ENCODE measurements at regions of chr1 and their contacts with region 1.

Region 1: GRCh38 chr1:24635195-24635843 is 7.8 kb upstream of the SRRM1 start:
- DNase-seq: peak; percentile 86
- H3K4me3 ChIP-seq: no peak overlapping the region
- H3K27ac ChIP-seq: no peak overlapping the region
- H3K4me1 ChIP-seq: peaks cover 4% of the 10 kb centered on the region
- CTCF ChIP-seq: peak; percentile 97

Region 2: DNA sequence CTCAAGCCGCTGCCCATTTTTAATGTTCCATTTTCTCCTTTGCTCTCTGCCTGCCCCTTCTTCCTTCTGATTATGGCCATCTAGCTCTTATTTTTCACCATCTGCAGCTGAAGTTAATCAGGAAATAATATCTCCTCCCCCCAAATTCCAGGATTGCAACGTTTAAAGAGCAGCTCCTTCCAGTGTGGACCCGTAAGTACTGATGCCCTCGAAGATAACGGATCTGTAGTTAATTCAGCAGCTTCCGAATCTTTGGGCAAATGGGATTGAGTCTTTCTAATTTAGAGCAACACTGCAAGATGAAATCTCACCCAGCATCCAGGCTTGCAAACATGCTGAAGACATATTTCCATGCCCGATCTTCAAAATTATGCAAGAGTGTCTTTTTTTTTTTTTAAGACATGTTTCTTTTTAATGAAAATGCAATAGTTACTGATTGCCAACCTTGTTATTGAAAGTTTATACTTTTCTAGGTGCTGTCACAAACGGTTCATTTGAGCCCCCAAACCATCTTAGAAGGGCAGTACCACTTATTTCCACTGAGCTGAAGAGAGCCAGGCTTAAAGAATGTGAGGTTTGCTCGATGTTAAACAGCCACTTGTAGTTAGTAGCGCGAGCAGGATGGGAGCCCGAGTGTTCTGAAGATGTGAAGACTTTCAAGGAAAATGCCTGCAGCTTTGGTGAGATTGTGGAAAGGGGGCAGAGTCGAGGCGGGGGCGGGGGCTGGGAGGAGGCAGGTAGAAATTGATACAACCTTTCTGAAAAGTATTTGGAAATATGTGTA is 143.6 kb before region 1 on chr1:
- CTCF ChIA-PET with region 1: no interaction called
- POLR2A ChIA-PET with region 1: no interaction called
- intact Hi-C with region 1: no loop called
- DNase-seq: no peak
- H3K4me3 ChIP-seq: no peak overlapping the region
- H3K27ac ChIP-seq: no peak overlapping the region
- H3K4me1 ChIP-seq: peaks cover 7% of the 10 kb centered on the region
- CTCF ChIP-seq: no peak

Region 3: DNA sequence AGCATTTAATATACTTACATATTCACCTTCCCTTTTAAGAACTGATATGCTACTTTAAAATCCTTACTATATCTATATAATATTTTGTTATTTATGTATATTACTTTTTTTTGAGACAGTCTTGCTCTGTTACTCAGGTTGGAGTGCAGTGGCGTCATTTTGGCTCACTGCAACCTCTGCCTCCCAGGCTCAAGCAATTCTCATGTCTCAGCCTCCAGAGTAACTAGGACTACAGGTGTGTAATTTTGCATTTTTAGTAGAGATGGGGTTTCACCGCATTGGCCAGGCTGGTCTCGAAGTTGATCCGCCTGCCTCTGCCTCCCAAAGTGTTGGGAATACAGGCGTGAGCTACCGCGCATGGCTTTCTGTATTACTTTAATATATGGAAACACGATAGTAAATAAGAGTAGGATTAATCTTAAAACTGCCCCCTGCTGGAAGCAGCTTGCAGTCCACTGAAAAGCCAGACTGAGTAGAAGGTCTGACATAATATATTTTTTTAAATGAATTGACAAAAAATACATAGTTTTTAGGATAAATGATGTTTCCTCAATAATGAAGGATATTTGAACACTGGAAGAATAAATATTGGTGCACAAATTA is 108.3 kb before region 1 on chr1:
- CTCF ChIA-PET with region 1: no interaction called
- POLR2A ChIA-PET with region 1: no interaction called
- intact Hi-C with region 1: no loop called
- DNase-seq: peak; percentile 57
- H3K4me3 ChIP-seq: no peak overlapping the region
- H3K27ac ChIP-seq: no peak overlapping the region
- H3K4me1 ChIP-seq: peaks cover 62% of the 10 kb centered on the region
- CTCF ChIP-seq: peak; percentile 93

Region 4: DNA sequence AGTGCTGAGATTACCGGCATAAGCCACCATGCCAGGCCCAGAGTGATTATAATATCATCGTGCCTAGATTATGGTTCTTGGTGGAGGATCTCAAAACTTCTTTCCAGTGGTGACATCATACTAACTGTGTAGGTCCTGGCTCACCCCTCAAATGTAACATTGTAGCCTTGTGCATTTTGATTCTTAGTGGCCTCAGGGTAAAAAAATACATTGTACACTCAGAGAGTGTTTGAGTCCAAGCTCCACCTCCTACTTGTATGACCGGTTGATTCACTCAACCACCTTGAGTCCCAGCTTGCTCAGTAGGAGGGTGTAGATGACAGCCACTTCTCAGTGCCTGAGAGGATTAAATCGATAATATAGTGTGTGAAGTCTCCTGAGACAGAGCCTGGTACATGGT is 41.2 kb before region 1 on chr1:
- CTCF ChIA-PET with region 1: no interaction called
- POLR2A ChIA-PET with region 1: interaction called, 3 read pairs
- intact Hi-C with region 1: loop called (anchors 5 kb)
- DNase-seq: no peak
- H3K4me3 ChIP-seq: no peak overlapping the region
- H3K27ac ChIP-seq: no peak overlapping the region
- H3K4me1 ChIP-seq: no peaks in the 10 kb centered on the region
- CTCF ChIP-seq: no peak

Measured in OCI-LY7 (cell line).